HEK293 (cell line): ENCODE measurements at regions of chr2 and their contacts with region 1.

Region 1: GRCh38 chr2:70124983-70125480 is 37.8 kb downstream of the PCBP1 start:
- H3K4me3 ChIP-seq: peak overlapping the region; percentile 45
- H3K27ac ChIP-seq: peak overlapping the region; percentile 93
- H3K4me1 ChIP-seq: peaks cover 8% of the 10 kb centered on the region
- CTCF ChIP-seq: no peak

Region 2: DNA sequence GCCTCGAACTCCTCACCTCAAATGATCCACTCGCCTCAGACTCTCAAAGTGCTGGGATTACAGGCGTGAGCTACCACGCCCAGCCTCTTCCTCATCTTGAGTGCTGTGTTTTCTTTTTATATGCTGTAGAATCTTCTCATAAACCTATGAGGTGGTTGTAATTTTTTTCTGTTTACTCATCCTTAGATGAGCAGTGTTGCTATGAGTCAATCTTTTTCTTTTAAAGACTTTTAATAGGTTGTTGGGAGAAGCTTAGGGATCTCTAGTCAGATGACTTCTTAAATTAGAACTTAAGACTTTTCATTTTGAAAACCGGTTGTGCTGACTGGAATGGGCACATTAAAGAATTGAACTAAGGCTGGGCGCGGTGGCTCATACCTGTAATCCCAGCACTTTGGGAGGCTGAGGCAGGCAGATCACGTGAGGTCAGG is 472.8 kb before region 1 on chr2:
- CTCF ChIA-PET with region 1: no interaction called
- POLR2A ChIA-PET with region 1: no interaction called
- H3K4me3 ChIP-seq: no peak overlapping the region
- H3K27ac ChIP-seq: no peak overlapping the region
- H3K4me1 ChIP-seq: no peaks in the 10 kb centered on the region
- CTCF ChIP-seq: no peak

Region 3: GRCh38 chr2:70086838-70087701 is 38.0 kb before region 1 on chr2 and contains the start of gene PCBP1:
- CTCF ChIA-PET with region 1: interaction called, 3 read pairs
- POLR2A ChIA-PET with region 1: interaction called, 27 read pairs
- H3K4me3 ChIP-seq: peak within 1 kb of the TSS; percentile 70
- H3K27ac ChIP-seq: peak within 1 kb of the TSS; percentile 100
- H3K4me1 ChIP-seq: peaks cover 11% of the 10 kb centered on the region
- CTCF ChIP-seq: no peak

Region 4: DNA sequence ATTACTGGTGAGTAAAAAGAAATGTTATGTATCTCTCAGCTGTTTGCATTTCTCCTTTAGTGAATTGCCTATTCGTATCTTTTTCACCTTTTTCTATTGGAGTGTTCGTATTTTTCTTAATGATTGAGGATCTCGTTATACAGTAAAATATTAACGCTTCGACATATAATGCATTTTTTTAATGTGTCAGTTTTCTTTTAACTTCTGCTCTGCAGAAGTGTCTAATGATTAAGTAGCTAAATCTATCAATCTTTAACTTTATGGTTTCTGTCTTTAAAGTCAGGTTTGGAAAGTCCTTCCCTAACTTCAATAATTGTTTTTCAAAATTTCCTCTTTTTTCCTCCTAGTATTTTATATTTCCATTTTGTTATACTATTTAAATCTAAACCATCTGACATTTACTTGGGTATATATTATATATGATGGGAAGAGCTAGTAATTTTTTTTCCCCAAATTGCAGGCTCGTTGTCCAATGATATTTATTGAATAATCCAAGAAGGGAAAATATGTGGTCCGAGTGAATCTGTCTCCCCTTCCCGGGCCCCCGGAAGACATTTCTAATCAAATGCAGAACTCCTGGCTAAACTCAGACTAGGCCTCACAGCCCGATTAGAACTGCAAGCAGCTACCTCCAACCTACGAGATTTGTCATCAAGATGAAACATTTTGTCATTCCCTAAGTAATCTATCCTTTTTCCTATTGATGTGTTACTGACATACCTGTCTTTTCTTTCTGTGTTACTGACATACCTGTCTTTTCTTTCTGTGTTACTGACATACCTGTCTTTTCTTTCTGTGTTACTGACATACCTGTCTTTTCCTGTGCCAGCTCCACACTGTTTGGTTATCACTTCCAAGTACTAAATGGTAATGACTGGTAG is 20.6 kb before region 1 on chr2:
- CTCF ChIA-PET with region 1: interaction called, 3 read pairs
- POLR2A ChIA-PET with region 1: interaction called, 21 read pairs
- H3K4me3 ChIP-seq: no peak overlapping the region
- H3K27ac ChIP-seq: peak overlapping the region; percentile 56; the same call in 1 of the 2 replicates
- H3K4me1 ChIP-seq: peaks cover 10% of the 10 kb centered on the region
- CTCF ChIP-seq: no peak

Region 5: GRCh38 chr2:70137519-70137918 is 12.5 kb after region 1 on chr2:
- CTCF ChIA-PET with region 1: interaction called, 6 read pairs
- POLR2A ChIA-PET with region 1: interaction called, 17 read pairs
- H3K4me3 ChIP-seq: no peak overlapping the region
- H3K27ac ChIP-seq: 0 out of 2 replicates have a peak overlapping the region, but pooled peaks have one; percentile 28
- H3K4me1 ChIP-seq: peaks cover 16% of the 10 kb centered on the region
- CTCF ChIP-seq: no peak

Region 6: DNA sequence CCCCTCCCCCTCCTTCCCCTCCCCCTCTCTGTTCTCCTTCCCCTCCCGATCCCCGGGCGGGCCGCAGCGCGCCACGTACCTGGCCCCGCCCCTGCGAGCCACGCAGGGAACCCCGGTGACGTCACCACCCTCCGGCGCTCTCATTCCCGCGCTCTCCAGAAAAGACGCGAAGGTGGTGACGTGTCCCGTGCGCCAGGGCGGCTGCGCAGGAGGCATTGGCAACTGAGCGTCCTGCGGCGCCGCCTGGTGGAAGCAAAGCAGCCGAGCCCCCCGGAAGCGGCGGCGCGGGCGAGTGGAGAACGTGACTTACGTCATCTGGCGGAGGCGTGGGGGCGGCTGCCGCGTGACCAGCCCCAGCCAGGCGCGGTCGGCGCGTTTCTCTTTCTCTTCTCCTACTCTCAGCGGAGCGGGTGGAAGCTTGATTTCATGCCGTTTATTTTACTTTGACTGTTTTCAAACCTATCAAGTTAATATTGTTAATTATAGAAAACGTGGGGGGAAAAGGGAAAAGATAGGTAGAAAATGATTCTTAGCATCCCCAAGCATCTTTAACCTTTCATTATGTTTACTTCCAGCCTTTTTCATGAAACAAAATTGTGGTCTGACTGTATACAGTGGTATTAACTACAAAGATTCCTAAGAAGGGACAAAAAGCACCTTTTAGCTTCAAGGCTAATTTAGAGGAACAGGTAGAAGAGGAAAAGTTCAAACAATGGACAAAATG is 17.7 kb after region 1 on chr2:
- CTCF ChIA-PET with region 1: interaction called, 6 read pairs
- POLR2A ChIA-PET with region 1: interaction called, 17 read pairs
- H3K4me3 ChIP-seq: peak overlapping the region; percentile 54
- H3K27ac ChIP-seq: peak overlapping the region; percentile 91
- H3K4me1 ChIP-seq: peaks cover 6% of the 10 kb centered on the region; the same call in 1 of the 2 replicates
- CTCF ChIP-seq: peak; percentile 100

Region 7: DNA sequence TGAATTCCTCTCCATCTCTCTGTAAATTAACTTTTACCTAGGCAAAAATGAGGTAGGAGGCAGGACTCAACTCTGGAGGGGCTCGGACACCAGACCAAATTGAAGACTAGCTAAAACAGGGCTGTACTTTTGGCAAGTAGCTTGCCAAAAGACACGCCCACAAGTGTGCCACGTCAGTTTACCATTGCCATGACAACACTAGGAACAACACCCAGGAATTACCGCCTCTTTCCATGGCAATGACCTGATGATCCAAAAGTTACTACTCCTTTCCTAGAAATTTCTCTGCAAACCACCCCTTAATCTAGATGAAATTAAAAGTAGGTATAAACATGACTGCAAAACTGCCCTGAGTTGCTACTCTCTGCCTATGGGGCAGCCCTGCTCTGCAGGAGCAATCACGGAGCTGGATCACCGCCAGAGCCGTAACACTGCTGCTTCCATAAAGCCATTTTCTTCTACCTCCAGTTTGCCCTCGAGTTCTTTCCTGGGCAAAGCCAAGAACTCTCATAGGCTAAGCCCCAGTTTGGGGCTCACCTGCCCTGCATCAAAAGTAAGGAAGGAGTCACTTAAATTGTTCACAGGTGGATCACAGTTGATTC is 242.8 kb after region 1 on chr2:
- CTCF ChIA-PET with region 1: no interaction called
- POLR2A ChIA-PET with region 1: no interaction called
- H3K4me3 ChIP-seq: no peak overlapping the region
- H3K27ac ChIP-seq: no peak overlapping the region
- H3K4me1 ChIP-seq: 0 out of 2 replicates have a peak, but pooled peaks cover 3% of the 10 kb centered on the region
- CTCF ChIP-seq: no peak